CD4-positive, alpha-beta T cell (primary cell): ENCODE measurements at regions of chr9 and their contacts with region 1.

Region 1: DNA sequence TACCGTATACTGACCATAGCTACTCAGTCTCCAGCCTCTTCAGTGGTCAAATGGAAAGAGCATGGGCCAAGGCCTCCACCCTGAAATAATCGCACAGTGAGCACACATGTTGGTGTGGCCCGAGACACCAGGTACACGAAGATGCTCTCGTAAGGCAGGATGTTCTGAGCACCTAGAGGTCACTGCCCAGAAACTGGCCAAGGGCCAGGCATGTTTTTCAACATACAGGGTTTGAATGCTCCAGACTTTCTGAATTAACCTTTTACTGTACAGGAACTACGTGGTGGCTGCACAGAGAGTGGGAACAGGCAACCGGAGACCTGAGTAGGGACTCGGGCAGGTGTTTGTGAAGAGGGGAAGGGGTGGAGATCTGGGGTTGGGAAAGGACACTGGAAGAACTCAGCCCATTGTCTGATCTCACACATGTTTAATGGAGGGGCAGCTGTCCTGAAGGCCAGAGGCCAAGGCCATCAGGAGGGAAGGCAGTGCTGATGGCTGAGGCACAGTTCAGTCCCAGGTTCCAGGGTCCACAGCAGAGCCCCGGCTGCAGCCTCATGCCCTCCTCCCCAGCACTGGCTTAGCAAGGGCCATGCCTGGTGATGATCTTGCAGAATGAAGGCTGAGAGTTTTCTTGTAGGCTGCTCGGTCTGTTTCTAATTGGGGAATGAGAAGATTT is 48.5 kb upstream of the ANKRD18A start:
- DNase-seq: no peak
- ATAC-seq: no peak
- H3K4me3 ChIP-seq: no peak overlapping the region
- H3K4me3 Mint-ChIP-seq: no peak overlapping the region
- H3K27ac ChIP-seq: no peak overlapping the region
- H3K27ac Mint-ChIP-seq: no peak overlapping the region
- H3K4me1 ChIP-seq: no peaks in the 10 kb centered on the region
- H3K4me1 Mint-ChIP-seq: no peaks in the 10 kb centered on the region
- H3K27me3 ChIP-seq: no peaks in the 10 kb centered on the region
- H3K27me3 Mint-ChIP-seq: peaks cover under 1% of the 10 kb centered on the region
- CTCF ChIP-seq: no peak

Region 2: DNA sequence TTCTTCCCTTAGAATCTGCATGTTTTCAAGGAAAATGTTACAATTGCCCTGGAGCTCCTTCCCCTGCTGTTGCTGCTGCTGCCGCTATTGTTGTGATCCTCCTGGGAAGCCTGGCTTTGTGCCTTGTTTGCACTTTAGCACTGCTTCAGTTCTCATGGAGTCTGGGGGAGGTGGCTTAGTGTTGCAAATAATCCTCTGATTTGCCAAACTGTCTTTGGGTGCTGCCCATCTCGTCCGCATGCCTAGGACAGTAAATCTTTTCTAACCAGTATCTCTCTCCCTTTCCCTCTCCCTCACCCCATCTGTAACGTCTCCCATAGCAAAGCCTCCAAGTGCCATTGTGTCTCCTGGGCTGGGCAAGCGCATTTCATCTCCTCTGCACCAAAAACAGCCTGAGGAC is 20.7 kb after region 1 on chr9:
- CTCF ChIA-PET with region 1: no interaction called
- POLR2A ChIA-PET with region 1: no interaction called
- intact Hi-C with region 1: loop called in 1 of 2 experiments (anchors 2 kb)
- DNase-seq: no peak
- ATAC-seq: no peak
- H3K4me3 ChIP-seq: no peak overlapping the region
- H3K4me3 Mint-ChIP-seq: no peak overlapping the region
- H3K27ac ChIP-seq: no peak overlapping the region
- H3K27ac Mint-ChIP-seq: no peak overlapping the region
- H3K4me1 ChIP-seq: no peaks in the 10 kb centered on the region
- H3K4me1 Mint-ChIP-seq: no peaks in the 10 kb centered on the region
- H3K27me3 ChIP-seq: peaks cover 0 to 5% of the 10 kb centered on the region in 2 experiments
- H3K27me3 Mint-ChIP-seq: peaks cover 24% of the 10 kb centered on the region
- CTCF ChIP-seq: no peak